ENCODE measurements at regions of chr2 and their contacts with region 1.

Region 1: GRCh38 chr2:203730076-203730729 is 23.8 kb downstream of the CD28 start:
- DNase-seq: no peak
- H3K4me3 Mint-ChIP-seq: peak overlapping the region; percentile 17
- H3K27ac Mint-ChIP-seq: peak overlapping the region; percentile 97
- H3K4me1 Mint-ChIP-seq: peaks cover 91% of the 10 kb centered on the region
- H3K27me3 Mint-ChIP-seq: no peaks in the 10 kb centered on the region

Region 2: GRCh38 chr2:202780514-202781021 is 949.6 kb before region 1 on chr2:
- CTCF ChIA-PET with region 1: no interaction called
- intact Hi-C with region 1: loop called (anchors 2 kb)
- DNase-seq: peak; percentile 18
- H3K4me3 Mint-ChIP-seq: no peak overlapping the region
- H3K27ac Mint-ChIP-seq: no peak overlapping the region
- H3K4me1 Mint-ChIP-seq: peaks cover 15% of the 10 kb centered on the region
- H3K27me3 Mint-ChIP-seq: no peaks in the 10 kb centered on the region

Region 3: GRCh38 chr2:203740780-203741281 is 10.6 kb after region 1 on chr2:
- CTCF ChIA-PET with region 1: interaction called, 7 read pairs
- intact Hi-C with region 1: loop called (anchors 1 kb)
- DNase-seq: peak; percentile 69
- H3K4me3 Mint-ChIP-seq: peak overlapping the region; percentile 54
- H3K27ac Mint-ChIP-seq: peak overlapping the region; percentile 97
- H3K4me1 Mint-ChIP-seq: peaks cover 88% of the 10 kb centered on the region
- H3K27me3 Mint-ChIP-seq: no peaks in the 10 kb centered on the region

Region 4: DNA sequence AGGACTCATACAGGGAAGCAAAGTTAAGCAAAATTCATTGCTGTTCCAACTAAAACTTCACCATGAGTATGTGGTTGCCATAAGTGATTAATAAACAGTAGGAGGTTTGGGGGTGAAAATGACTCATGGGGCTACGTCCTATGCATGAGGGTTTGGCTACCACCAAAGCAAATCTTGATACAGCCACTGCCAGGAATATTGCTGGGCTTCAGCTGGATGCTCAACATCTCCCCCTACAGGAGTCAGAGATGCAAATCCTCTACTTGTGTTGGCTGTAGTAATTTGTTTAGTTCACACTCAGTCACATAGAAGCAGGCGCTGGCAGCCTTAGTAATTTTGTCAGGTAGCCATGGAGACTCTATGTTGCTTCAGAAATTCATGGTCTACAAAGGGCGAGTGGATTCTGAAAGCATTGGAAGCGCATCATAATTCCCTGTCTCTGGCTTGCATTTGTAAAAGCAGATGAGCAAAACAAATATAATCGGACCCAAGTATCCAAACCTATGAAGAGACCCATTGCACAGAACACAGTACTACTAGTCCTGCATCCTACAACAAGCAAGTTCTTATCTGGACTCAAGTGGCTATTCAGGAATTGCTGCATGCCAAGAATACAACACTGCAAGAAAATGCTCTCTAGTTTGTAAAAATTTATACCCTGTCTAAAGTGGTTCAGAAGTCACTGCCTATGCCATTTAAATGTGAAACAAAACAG is 52.2 kb after region 1 on chr2:
- CTCF ChIA-PET with region 1: interaction called, 5 read pairs
- intact Hi-C with region 1: loop called (anchors 1 kb)
- DNase-seq: peak; percentile 86
- H3K4me3 Mint-ChIP-seq: no peak overlapping the region
- H3K27ac Mint-ChIP-seq: peak overlapping the region; percentile 64
- H3K4me1 Mint-ChIP-seq: peaks cover 50% of the 10 kb centered on the region
- H3K27me3 Mint-ChIP-seq: no peaks in the 10 kb centered on the region

Region 5: GRCh38 chr2:203893401-203893800 is 163.2 kb after region 1 on chr2:
- CTCF ChIA-PET with region 1: no interaction called
- intact Hi-C with region 1: loop called (anchors 1 kb)
- DNase-seq: no peak
- H3K4me3 Mint-ChIP-seq: no peak overlapping the region
- H3K27ac Mint-ChIP-seq: no peak overlapping the region
- H3K4me1 Mint-ChIP-seq: peaks cover 67% of the 10 kb centered on the region
- H3K27me3 Mint-ChIP-seq: no peaks in the 10 kb centered on the region

Measured in activated naive CD4-positive, alpha-beta T cell treated with anti-CD3 and anti-CD28 coated beads for 36 hours (primary cell).